HepG2 (cell line): ENCODE measurements at regions of chr10 and their contacts with region 1.

Region 1: GRCh38 chr10:115417585-115418265 is 324.6 kb downstream of the ATRNL1 start:
- DNase-seq: peak; percentile 60
- ATAC-seq: peak; percentile 99
- H3K4me3 ChIP-seq: no peak overlapping the region
- H3K27ac ChIP-seq: no peak overlapping the region
- H3K4me1 ChIP-seq: no peaks in the 10 kb centered on the region
- H3K27me3 ChIP-seq: no peaks in the 10 kb centered on the region
- CTCF ChIP-seq: peak; percentile 82
- EP300 ChIP-seq: no peak
- POLR2A ChIP-seq: no peak
- RAD21 ChIP-seq: no peak

Region 2: GRCh38 chr10:115141254-115141653 is 276.5 kb before region 1 on chr10:
- CTCF ChIA-PET with region 1: interaction called, 3 read pairs
- POLR2A ChIA-PET with region 1: no interaction called
- in situ Hi-C with region 1: loop called (anchors 10 kb)
- intact Hi-C with region 1: no loop called
- DNase-seq: no peak
- ATAC-seq: no peak
- H3K4me3 ChIP-seq: no peak overlapping the region
- H3K27ac ChIP-seq: no peak overlapping the region
- H3K4me1 ChIP-seq: no peaks in the 10 kb centered on the region
- H3K27me3 ChIP-seq: no peaks in the 10 kb centered on the region
- CTCF ChIP-seq: peak; percentile 33
- EP300 ChIP-seq: no peak
- POLR2A ChIP-seq: no peak
- RAD21 ChIP-seq: no peak

Region 3: DNA sequence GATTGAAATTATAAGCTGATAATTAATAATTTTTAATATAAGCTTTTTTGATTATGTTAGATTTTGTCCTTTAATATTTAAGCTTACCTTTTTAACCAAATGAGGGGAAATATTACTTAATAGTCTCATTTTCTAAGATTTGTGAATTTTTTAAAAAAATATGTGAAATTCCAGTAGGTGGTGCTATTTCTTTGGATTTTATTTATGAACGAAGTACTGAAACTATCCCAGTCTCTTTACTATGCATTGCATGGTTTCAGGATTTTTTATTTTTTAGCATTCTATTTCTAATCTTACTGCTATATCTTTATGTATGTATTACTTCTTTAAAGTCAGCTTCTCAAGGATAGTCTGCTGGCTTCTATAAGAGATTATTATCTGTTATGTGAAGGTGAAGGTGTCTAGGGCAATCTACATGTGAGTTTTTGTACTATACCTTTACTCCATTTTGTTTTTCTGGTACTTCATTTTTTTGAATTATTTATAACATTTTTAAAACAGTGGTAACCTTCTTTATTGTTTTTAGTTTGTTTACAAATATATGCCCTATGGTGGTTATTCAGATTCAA is 246.2 kb before region 1 on chr10:
- CTCF ChIA-PET with region 1: interaction called, 9 read pairs
- POLR2A ChIA-PET with region 1: no interaction called
- in situ Hi-C with region 1: no loop called
- intact Hi-C with region 1: loop called (anchors 1 kb)
- DNase-seq: no peak
- ATAC-seq: no peak
- H3K4me3 ChIP-seq: no peak overlapping the region
- H3K27ac ChIP-seq: no peak overlapping the region
- H3K4me1 ChIP-seq: no peaks in the 10 kb centered on the region
- H3K27me3 ChIP-seq: no peaks in the 10 kb centered on the region
- CTCF ChIP-seq: no peak; the same call in 1 of the 2 replicates
- EP300 ChIP-seq: no peak
- POLR2A ChIP-seq: no peak
- RAD21 ChIP-seq: no peak